HCT116 (cell line): ENCODE measurements at regions of chr1 and their contacts with region 1.

Region 1: DNA sequence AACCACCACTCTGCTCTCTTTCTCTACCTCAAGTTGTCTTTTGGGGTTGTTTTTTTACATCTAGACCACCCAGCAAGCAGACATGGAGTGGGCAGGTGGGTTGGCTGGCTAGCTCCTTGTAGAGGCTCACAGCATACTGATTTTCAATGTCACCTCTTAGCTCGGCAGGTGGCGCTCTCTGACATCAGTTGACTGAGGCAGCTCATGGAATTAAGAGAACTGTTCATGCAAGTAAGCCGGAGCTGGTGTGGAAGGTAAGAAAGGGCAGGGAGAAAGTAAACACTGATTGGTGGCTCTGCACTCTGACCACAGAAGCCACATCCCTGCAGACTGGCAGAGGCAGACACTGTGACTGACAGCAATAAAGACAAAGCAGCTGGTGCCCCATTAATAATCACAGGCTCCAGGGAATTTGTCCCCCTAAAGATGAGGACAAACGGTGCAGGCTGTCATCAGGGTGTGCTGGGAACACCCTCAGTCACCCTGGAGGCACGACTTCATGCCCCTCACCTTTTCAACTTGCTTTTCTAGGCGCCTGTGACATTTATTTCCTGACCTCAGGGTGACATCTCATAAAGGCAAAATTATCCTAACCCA is 226.8 kb downstream of the LMX1A start:
- DNase-seq: peak; percentile 51
- ATAC-seq: peak; percentile 95
- H3K4me3 ChIP-seq: no peak overlapping the region
- H3K27ac ChIP-seq: no peak overlapping the region
- H3K4me1 ChIP-seq: no peaks in the 10 kb centered on the region
- H3K27me3 ChIP-seq: peaks cover 73% of the 10 kb centered on the region
- CTCF ChIP-seq: peak; percentile 54 to 79 (median 75); a peak in 5 of 6 replicates
- POLR2A ChIP-seq: no peak
- RAD21 ChIP-seq: peak; percentile 62

Region 2: DNA sequence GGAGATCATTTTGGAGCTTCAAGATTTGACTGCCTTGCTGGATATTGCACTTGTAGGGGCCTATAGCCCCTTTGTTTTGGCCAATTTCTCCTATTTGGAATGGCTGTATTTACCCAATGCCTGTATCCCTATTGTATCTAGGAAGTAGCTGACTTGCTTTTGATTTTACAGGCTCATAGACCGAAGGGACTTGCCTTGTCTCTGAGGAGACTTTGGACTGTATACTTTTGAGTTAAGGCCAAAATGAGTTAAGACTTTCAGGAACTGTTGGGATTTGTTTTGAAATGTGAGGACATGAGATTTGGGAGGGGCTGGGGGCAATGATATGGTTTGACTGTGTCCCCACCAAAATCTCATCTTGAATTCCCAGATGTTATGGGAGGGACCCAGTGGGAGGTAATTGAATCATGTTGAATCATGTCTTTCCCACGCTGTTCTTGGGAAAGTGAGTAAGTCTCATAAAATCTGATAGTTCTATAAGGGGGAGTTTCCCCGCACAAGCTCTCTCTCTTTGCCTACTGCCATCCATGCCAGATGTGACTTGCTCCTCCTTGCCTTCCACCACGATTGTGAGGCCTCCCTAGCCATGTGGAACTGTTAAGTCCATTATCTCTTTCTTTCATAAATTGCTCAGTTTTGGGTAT is 49.3 kb before region 1 on chr1:
- CTCF ChIA-PET with region 1: no interaction called
- POLR2A ChIA-PET with region 1: no interaction called
- RAD21 ChIA-PET with region 1: no interaction called
- intact Hi-C with region 1: no loop called
- DNase-seq: no peak
- ATAC-seq: no peak
- H3K4me3 ChIP-seq: no peak overlapping the region
- H3K27ac ChIP-seq: no peak overlapping the region
- H3K4me1 ChIP-seq: no peaks in the 10 kb centered on the region
- H3K27me3 ChIP-seq: no peaks in the 10 kb centered on the region
- CTCF ChIP-seq: no peak
- POLR2A ChIP-seq: no peak
- RAD21 ChIP-seq: no peak

Region 3: DNA sequence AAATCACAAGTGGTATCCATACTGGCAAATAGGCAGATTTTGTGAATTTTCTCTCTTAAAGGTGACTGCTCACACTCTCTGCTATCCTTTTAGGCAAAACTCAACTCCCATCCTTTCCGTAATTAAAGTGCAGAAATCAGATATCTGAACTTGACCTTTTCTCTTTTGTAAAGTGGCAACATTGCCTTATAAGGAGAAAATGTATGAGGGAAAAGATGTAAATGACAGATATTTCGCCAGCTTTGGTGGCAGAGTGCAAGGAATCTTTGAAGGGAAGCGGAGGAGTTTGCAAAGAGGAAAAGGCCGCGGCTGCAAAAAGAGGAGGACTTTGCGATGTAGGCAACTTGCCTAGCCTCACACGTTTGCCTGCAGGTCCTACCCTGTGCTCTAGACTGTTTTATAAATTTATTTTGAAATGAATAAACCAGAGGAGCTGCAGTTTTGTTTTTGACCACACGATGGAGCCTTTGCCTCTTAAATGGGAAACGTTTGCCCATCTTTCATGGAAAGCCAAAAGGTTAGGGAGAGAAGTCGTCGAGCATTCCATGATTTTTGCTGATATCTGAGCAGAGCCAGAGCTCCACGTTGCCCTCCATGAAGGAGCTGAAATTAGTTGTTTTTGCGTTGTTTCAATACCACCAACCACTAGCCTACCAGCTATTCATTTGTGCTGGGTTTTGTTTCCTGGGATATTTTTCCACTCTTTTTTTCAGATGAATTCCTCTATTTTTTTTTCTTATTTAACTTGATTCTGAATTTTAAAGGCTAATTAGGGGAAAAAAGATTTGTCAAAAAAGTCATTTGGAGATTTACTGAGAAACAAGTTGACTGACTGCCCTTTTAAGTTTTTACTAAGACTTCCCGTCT is 15.4 kb before region 1 on chr1:
- CTCF ChIA-PET with region 1: interaction called, 22 read pairs
- POLR2A ChIA-PET with region 1: no interaction called
- RAD21 ChIA-PET with region 1: no interaction called
- intact Hi-C with region 1: no loop called
- DNase-seq: peak; percentile 44
- ATAC-seq: peak; percentile 74
- H3K4me3 ChIP-seq: no peak overlapping the region
- H3K27ac ChIP-seq: no peak overlapping the region
- H3K4me1 ChIP-seq: peaks cover 0 to 13% of the 10 kb centered on the region in 2 experiments; a peak in 2 of 4 replicates
- H3K27me3 ChIP-seq: peaks cover 16% of the 10 kb centered on the region
- CTCF ChIP-seq: peak; percentile 65 to 79 (median 67)
- POLR2A ChIP-seq: no peak
- RAD21 ChIP-seq: peak; percentile 82